HEK293T (cell line): ENCODE measurements at regions of chr10 and their contacts with region 1.

Region 1: GRCh38 chr10:114304017-114304570 is 65.0 kb downstream of the VWA2 start:
- DNase-seq: peak; percentile 87

Region 2: GRCh38 chr10:114403541-114404161 is 99.6 kb after region 1 on chr10:
- CTCF ChIA-PET with region 1: interaction called, 10 read pairs
- POLR2A ChIA-PET with region 1: interaction called, 3 read pairs
- DNase-seq: peak; percentile 63

Region 3: DNA sequence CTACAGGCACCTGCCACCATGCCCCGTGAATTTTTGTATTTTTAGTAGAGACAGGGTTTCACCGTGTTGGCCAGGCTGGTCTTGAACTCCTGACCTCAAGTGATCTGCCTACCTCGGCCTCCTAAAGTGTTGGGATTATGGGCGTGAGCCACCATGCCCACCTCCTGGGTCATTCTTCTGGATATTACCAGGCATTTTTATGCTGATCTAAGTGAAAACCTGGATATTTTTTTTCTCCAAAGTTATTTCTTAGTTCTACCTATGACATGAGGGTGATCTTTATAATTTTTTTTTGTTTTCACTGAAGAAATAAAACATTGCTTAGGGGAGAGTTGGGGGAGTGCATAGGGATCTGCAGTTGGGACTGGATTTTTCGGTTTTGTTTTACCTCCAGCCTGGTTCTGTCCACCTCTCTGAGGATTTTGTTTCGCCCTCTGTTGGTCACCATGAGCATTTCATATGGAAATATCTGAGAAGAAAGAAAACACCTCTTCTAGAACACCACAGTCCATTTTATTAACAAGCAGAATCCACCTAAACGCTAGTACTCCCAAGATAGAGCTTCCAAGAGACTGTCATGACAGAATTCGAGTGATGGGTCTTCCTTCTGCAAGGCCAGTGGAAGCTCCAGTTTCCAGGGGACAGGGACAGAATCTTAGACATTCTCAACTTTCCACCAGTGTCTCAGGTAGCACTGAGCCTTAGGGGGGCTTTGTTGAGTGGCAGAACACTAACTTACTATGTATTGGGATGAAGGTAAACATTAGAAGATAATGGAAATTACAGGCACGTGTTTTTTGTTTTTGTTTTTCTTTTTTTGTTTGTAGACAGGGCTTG is 133.6 kb after region 1 on chr10:
- CTCF ChIA-PET with region 1: interaction called, 11 read pairs
- POLR2A ChIA-PET with region 1: no interaction called
- DNase-seq: peak; percentile 43

Region 4: DNA sequence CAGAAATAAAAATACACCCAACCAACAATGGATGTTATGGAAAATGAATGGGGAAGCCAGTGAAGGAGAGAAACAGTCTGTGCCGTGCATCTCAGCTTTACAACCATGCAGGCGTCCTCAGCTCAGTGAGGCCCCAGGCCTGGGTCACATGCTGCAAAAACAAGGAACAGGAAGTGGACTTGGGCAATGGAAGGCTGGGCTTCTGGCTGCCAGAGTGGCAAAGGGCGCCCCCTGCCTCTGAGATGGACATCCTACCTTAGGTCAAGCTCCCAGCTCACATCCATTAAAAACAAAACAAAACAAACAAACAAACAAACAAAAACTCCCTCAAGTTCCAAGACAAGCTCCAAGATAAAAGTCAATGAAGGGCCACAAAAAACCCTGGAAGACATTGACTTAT is 154.9 kb after region 1 on chr10:
- CTCF ChIA-PET with region 1: interaction called, 14 read pairs
- POLR2A ChIA-PET with region 1: no interaction called
- DNase-seq: peak; percentile 63